ENCODE measurements at regions of chr16 and their contacts with region 1.

Region 1: DNA sequence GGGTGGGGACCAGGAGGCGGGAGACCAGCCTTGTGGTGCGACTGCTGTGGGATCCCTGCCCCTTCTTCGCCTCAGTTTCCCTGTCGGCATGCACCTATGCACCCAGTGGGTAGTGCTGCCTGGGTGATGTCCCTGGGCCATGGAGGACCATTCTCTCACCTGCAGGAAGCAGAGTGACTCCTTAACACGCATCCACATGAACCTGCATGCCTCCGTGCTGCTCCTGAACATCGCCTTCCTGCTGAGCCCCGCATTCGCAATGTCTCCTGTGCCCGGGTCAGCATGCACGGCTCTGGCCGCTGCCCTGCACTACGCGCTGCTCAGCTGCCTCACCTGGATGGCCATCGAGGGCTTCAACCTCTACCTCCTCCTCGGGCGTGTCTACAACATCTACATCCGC is 25.2 kb downstream of the ADGRG5 start:
- DNase-seq: peak in 1 of 2 donors; percentile 7
- H3K4me3 ChIP-seq: no peak overlapping the region
- H3K27ac ChIP-seq: no peak overlapping the region
- H3K4me1 ChIP-seq: no peaks in the 10 kb centered on the region
- H3K27me3 ChIP-seq: no peaks in the 10 kb centered on the region
- CTCF ChIP-seq: no peak
- POLR2A ChIP-seq: no peak

Region 2: DNA sequence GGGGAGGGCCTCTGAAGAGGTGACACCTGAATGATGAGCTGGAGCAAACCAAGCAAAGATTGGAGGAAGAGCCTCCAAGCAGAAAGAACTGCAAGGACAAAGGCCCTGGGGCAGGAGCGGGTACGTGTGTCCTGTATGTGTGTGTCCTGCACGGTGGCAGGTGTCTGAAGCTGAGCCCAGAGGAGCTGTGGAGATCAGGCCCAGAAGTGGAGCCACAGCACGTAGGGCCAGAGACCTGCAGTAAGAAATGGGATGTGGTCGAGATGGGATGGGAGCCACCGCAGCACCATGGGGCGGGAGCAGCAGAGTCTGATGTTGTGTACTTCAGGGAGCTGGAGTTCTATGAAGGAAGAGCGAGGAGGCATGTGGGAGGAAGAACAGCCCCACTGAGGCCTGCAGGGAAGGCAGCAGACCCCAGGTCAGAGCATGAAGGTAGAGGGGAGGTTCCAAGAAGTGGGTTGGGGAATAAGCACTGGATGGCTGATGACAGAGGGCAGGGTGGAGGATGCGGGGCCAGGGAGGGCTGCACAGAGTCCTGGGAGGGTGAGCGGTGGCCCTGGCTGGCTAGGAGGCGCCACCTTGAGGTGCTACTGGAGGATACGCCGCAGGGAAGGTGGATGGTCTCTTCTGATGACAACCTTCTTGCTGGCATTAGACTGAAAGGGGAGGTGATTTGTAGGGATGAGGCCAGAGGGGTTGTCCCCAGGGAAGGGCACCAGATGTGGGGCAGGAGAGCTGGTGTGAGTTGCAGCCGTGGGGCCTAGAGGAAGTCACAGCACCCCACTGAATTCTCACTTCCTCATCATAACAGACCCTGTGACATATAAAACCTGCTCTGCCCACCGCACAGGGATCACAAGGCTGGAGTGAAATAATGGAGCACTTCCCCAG is 616.6 kb before region 1 on chr16:
- intact Hi-C with region 1: no loop called
- DNase-seq: no peak
- H3K4me3 ChIP-seq: no peak overlapping the region
- H3K27ac ChIP-seq: no peak overlapping the region
- H3K4me1 ChIP-seq: no peaks in the 10 kb centered on the region
- H3K27me3 ChIP-seq: no peaks in the 10 kb centered on the region
- CTCF ChIP-seq: peak in 2 of 3 donors; percentile 38 to 42
- POLR2A ChIP-seq: no peak

Region 3: GRCh38 chr16:57548408-57548807 is 19.3 kb before region 1 on chr16:
- intact Hi-C with region 1: loop called (anchors 1 kb)
- DNase-seq: no peak
- H3K4me3 ChIP-seq: no peak overlapping the region
- H3K27ac ChIP-seq: no peak overlapping the region
- H3K4me1 ChIP-seq: no peaks in the 10 kb centered on the region
- H3K27me3 ChIP-seq: no peaks in the 10 kb centered on the region
- CTCF ChIP-seq: no peak
- POLR2A ChIP-seq: no peak